Heart left ventricle (tissue), 16 donors: ENCODE measurements at regions of chr1 and their contacts with region 1.

Region 1: DNA sequence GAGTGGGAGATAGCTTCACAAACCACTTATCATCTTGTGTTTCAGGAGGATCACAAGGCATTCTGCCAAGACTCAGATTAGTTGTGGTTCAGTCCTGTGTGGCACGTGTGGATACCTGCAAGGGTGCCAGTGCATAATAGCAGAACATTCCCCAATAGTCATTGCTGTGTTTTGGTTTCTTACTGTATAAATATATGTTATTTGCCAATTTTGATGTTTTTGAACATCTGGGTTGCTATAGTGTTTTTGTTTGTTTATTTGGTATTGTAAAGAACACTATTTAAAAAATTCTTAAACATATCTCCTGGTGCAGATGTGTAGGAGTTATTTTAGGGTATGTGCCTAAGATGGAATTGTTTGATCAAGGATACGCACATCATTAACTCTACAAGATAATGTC is 5.4 kb upstream of the NTMT2 start:
- DNase-seq: no peak
- ATAC-seq: no peak
- H3K4me3 ChIP-seq: no peak overlapping the region
- H3K27ac ChIP-seq: no peak overlapping the region
- H3K4me1 ChIP-seq: peaks cover 0 to 5% (median 0%) of the 10 kb centered on the region in 12 donors
- H3K27me3 ChIP-seq: no peaks in the 10 kb centered on the region
- CTCF ChIP-seq: no peak
- POLR2A ChIP-seq: no peak

Region 2: DNA sequence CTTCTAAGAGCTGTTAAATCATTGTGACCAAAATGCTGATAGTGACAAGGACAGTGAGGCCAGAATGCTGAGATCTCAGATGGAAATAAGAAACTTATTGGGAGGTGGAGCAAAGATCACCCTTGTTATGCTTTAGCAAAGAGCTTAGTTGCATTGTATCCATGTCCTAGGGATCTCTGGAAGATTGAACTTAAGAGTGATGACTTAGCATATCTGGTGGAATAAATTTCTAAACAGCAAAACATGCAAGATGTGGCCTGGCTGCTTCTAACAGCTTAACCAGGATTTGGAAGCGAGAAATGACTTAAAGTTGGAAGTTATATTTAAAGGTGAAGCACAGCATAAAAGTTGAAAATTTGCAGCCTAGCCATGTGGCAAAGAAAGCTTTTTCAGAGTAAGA is 13.0 kb after region 1 on chr1:
- intact Hi-C with region 1: loop called in 1 of 10 experiments (anchors 1 kb)
- DNase-seq: no peak
- ATAC-seq: no peak
- H3K4me3 ChIP-seq: no peak overlapping the region
- H3K27ac ChIP-seq: no peak overlapping the region
- H3K4me1 ChIP-seq: peaks cover 0 to 16% (median 4%) of the 10 kb centered on the region in 12 donors
- H3K27me3 ChIP-seq: no peaks in the 10 kb centered on the region
- CTCF ChIP-seq: no peak
- POLR2A ChIP-seq: no peak